Spleen (tissue), 13 donors: ENCODE measurements at regions of chr11 and their contacts with region 1.

Region 1: GRCh38 chr11:13955971-13956421 is 6.5 kb upstream of the SPON1 start:
- DNase-seq: no peak
- H3K4me3 ChIP-seq: no peak overlapping the region
- H3K27ac ChIP-seq: no peak overlapping the region
- H3K4me1 ChIP-seq: peaks cover 0 to 12% (median 5%) of the 10 kb centered on the region in 6 donors
- H3K27me3 ChIP-seq: peaks cover 0 to 46% (median 1%) of the 10 kb centered on the region in 7 donors
- CTCF ChIP-seq: peak; percentile 69 to 85 (median 80)
- POLR2A ChIP-seq: no peak

Region 2: GRCh38 chr11:13834463-13834862 is 121.5 kb before region 1 on chr11:
- intact Hi-C with region 1: no loop called
- DNase-seq: no peak
- H3K4me3 ChIP-seq: no peak overlapping the region
- H3K27ac ChIP-seq: no peak overlapping the region
- H3K4me1 ChIP-seq: no peaks in the 10 kb centered on the region
- H3K27me3 ChIP-seq: no peaks in the 10 kb centered on the region
- CTCF ChIP-seq: peak in 3 of 11 experiments; percentile 7 to 28 (median 15)
- POLR2A ChIP-seq: no peak

Region 3: DNA sequence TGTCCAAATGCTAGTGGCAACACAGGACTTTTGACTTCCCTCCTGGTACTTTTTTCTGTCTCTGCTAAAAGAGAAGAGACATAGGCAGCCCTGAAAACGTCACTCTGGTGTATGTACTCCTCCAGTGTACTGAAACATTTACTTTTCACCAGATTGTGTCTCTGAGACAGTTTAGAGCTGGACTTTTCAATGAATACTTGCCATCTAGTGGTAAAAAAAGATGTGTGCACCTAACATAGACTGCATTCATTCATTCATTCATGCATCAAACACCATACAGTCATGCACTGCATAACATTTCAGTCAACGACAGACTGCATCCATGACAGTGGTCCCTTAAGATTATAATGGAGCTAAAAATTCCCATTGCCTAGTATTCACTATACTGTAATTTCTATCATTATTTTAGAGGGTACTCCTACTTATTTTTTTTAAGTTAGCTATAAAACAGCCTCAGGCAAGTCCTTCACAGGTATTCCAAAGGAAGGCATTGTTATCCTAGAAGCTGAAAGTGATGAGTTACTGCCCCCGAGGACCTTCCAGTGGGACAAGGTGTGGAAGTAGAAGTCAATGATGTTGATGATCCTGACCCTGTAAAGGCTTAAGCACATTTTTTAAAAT is 192.8 kb after region 1 on chr11:
- intact Hi-C with region 1: loop called (anchors 5 kb)
- DNase-seq: no peak
- H3K4me3 ChIP-seq: no peak overlapping the region
- H3K27ac ChIP-seq: no peak overlapping the region
- H3K4me1 ChIP-seq: no peaks in the 10 kb centered on the region
- H3K27me3 ChIP-seq: no peaks in the 10 kb centered on the region
- CTCF ChIP-seq: peak in 10 of 11 experiments; percentile 12 to 58 (median 40)
- POLR2A ChIP-seq: no peak

Region 4: DNA sequence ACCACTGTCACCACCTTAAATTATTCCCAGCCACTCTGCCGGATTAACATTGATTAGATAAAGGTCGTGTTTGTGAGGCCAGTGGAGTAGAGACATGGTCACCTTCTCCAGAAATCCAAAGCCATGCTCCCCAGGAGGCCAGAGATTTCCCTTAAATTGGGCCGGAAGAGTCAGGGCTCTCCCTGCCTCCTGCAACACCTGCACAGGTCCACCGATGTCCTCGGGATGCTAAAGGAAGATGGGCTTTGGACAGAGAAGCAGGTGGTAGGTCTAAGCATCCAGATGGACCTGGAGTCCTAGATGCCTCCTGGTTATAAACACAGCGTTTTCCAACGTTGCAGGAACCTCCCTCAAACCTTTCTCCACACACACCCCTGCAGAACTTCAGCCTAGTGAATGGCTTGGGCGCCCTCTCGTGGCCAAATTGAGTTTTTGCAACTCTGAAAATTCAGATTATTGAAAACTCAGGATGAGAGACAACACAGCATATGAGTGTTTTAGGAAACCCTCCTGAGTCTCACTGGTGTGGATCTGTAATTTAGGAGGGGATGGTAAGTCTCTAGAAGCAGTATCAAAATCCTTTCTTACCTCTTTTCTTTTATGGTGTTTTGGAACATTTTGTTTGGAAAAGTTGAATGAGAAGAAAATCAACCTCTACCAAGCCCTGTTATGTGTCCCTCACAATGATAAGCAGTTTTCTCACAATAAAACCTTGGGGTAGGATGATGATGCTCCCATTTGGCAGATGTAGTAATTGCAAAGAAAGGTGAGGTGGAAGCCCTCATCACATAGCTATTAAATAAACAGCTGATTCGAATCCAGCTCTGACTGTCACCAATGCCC is 293.3 kb after region 1 on chr11:
- intact Hi-C with region 1: loop called (anchors 5 kb)
- DNase-seq: peak; percentile 86
- H3K4me3 ChIP-seq: peak overlapping the region in 1 of 8 donors; percentile 36
- H3K27ac ChIP-seq: no peak overlapping the region
- H3K4me1 ChIP-seq: peaks cover 9 to 26% (median 16%) of the 10 kb centered on the region in 6 donors
- H3K27me3 ChIP-seq: peaks cover 0 to 35% (median 0%) of the 10 kb centered on the region in 7 donors
- CTCF ChIP-seq: peak; percentile 57 to 86 (median 78)
- POLR2A ChIP-seq: no peak

Region 5: GRCh38 chr11:14454861-14455632 is 499.1 kb after region 1 on chr11:
- intact Hi-C with region 1: loop called (anchors 10 kb)
- DNase-seq: no peak
- H3K4me3 ChIP-seq: no peak overlapping the region
- H3K27ac ChIP-seq: peak overlapping the region in 1 of 8 donors; percentile 8
- H3K4me1 ChIP-seq: peaks cover 0 to 16% (median 6%) of the 10 kb centered on the region in 6 donors
- H3K27me3 ChIP-seq: no peaks in the 10 kb centered on the region
- CTCF ChIP-seq: peak in 10 of 11 experiments; percentile 29 to 67 (median 55)
- POLR2A ChIP-seq: no peak